Calu3 (cell line): ENCODE measurements at regions of chr5 and their contacts with region 1.

Region 1: GRCh38 chr5:154189819-154190594 is 526 bp upstream of the GALNT10 start:
- DNase-seq: peak; percentile 89
- H3K4me3 Mint-ChIP-seq: peak overlapping the region; percentile 92
- H3K27ac Mint-ChIP-seq: no peak overlapping the region
- H3K4me1 Mint-ChIP-seq: peaks cover 49% of the 10 kb centered on the region
- H3K27me3 Mint-ChIP-seq: peaks cover 14% of the 10 kb centered on the region
- CTCF ChIP-seq: peak; percentile 50

Region 2: DNA sequence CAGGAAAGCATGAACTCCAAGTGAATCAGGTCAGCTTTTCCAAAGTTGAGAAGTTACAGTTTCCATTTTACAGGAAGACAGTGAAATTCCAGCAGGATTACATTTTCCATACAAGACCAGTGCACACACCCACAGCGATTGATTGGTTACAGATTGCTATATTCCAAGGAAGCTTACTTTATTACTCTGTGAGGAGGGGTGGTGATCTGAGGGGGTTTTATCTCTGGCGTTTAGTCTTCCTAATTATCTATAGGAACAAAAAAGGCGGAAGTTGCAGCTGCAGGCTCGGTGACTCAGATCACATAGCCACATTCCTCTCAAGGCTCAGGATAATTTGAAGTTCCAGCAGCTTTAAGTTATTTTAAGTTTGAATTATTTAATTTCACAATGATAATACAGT is 1334.6 kb before region 1 on chr5:
- CTCF ChIA-PET with region 1: no interaction called
- intact Hi-C with region 1: no loop called
- DNase-seq: no peak
- H3K4me3 Mint-ChIP-seq: no peak overlapping the region
- H3K27ac Mint-ChIP-seq: no peak overlapping the region
- H3K4me1 Mint-ChIP-seq: no peaks in the 10 kb centered on the region
- H3K27me3 Mint-ChIP-seq: no peaks in the 10 kb centered on the region
- CTCF ChIP-seq: no peak

Region 3: DNA sequence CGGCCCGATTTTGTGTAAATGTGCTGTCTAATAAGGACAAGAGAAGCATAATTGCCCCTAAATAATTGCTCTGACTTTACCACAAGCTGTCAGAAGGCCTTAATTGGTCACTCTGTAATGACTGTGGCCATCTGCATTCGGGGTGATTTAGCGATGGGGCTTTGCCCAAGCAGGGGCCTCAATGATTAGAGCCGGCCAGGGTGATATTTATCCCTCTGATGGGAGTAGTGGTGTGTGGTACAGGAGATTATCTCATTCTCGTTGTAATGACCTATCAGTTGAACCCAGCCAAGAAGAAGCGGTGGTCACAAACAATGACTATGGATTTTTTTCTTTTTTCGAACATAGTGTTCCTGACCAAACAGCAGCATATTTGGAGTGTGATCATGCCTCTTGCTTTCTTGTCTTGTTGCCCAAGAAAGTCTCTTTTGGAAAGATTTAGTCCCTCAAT is 183.7 kb after region 1 on chr5:
- CTCF ChIA-PET with region 1: no interaction called
- intact Hi-C with region 1: no loop called
- DNase-seq: no peak
- H3K4me3 Mint-ChIP-seq: no peak overlapping the region
- H3K27ac Mint-ChIP-seq: no peak overlapping the region
- H3K4me1 Mint-ChIP-seq: peaks cover 16% of the 10 kb centered on the region
- H3K27me3 Mint-ChIP-seq: no peaks in the 10 kb centered on the region
- CTCF ChIP-seq: no peak

Region 4: GRCh38 chr5:154405078-154405792 is 215.2 kb after region 1 on chr5:
- CTCF ChIA-PET with region 1: interaction called, 21 read pairs
- intact Hi-C with region 1: no loop called
- DNase-seq: peak; percentile 89
- H3K4me3 Mint-ChIP-seq: peak overlapping the region; percentile 54
- H3K27ac Mint-ChIP-seq: no peak overlapping the region
- H3K4me1 Mint-ChIP-seq: no peaks in the 10 kb centered on the region
- H3K27me3 Mint-ChIP-seq: no peaks in the 10 kb centered on the region
- CTCF ChIP-seq: peak; percentile 88